ENCODE measurements at regions of chr9 and their contacts with region 1.

Region 1: DNA sequence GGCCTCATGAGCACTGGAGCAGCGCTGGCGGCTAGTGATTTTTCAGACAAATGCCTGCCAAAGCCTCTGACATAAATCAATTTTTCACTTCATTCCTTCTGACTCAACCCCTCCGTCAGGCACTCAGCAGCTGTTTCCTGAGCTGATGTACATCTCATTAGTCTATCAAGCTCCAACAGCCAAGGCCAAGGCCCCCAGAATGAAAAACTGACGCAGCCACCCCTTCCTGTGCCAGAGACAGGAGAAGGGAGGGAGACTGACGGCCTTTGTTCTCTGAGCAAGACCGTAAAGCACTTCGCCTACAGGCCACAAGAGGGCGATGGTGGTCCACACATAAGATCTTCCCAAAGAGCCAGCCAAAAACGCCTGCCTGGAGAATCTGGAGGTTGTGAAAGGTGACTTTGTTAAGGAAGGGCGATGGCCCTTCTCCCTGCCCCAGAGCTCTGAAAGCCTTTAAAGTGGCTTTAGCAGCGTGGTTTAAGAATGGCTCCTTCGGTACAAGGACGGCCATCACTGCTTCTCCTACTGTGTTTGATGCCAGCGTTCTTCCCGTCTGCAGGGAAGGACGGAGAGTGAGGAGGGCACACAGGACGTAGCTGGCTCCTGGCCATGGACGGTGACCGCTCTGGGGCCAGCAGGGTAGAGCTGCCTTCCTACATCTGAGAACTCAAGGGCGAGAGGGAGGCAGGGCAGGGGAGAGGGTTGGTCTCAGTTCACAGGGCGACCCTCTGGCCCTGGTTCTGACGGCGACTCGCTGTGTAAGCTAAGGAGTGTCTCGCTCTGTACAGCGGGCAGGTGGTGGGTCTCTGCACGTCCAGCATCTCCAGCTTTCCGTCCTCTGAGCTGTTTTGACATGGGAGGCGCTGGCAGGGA is 37.0 kb downstream of the ALG2 start:
- DNase-seq: peak; percentile 99
- H3K4me3 ChIP-seq: peak overlapping the region in 2 of 3 experiments; percentile 20 to 25
- H3K27ac ChIP-seq: peak overlapping the region; percentile 88
- H3K4me1 ChIP-seq: peaks cover 10% of the 10 kb centered on the region
- H3K27me3 ChIP-seq: peaks cover 3 to 5% of the 10 kb centered on the region in 2 experiments
- CTCF ChIP-seq: peak; percentile 94 to 97
- POLR2A ChIP-seq: peak; percentile 50

Region 2: DNA sequence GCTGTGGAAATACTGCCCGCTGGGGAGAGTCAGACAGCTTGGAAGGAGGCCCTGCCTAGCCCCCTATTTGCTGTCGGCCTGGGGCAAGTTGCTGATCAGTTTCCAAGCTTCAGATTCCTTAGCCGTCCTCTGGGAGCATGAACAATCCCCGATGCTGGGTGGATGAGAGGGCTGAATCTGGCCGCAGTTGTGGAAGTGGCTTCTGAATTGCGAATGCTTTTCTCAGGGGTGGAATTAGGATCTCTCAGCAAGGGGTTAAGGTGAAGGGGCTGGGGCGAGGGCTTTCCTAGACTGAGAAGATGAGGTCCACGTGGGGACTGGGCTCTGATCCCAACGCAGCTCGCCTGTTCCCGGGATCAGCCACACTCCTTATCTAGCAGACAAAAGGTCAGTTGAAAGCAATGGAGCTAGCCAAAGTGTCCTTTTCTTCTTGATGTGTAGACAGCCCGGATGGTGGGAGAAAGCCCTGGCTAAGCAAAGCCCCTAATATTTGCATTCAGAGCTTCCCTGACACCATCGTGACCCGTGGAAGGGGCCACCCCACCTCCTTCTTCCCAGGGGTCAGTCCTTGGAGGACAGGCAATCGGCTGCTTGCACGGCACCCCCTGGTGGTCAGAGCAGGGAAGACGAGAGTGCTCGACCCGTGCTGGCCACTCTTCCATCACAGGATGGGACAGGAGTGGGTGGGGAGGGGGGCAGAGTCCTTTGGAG is 186.1 kb before region 1 on chr9:
- CTCF ChIA-PET with region 1: no interaction called
- POLR2A ChIA-PET with region 1: no interaction called
- dilution Hi-C with region 1: no loop called
- intact Hi-C with region 1: loop called (anchors 1 kb)
- DNase-seq: peak; percentile 50
- H3K4me3 ChIP-seq: no peak overlapping the region
- H3K27ac ChIP-seq: no peak overlapping the region
- H3K4me1 ChIP-seq: no peaks in the 10 kb centered on the region
- H3K27me3 ChIP-seq: peaks cover 0 to 10% of the 10 kb centered on the region in 2 experiments
- CTCF ChIP-seq: peak; percentile 77 to 90
- POLR2A ChIP-seq: no peak

Region 3: GRCh38 chr9:99221621-99222415 is 37.1 kb after region 1 on chr9 and contains the starts of genes ALG2 and SEC61B:
- CTCF ChIA-PET with region 1: interaction called, 25 read pairs
- POLR2A ChIA-PET with region 1: interaction called, 13 read pairs
- dilution Hi-C with region 1: no loop called
- intact Hi-C with region 1: loop called (anchors 1 kb)
- DNase-seq: peak; percentile 97
- H3K4me3 ChIP-seq: peak within 1 kb of the TSS; percentile 55 to 98 (median 91)
- H3K27ac ChIP-seq: peak within 1 kb of the TSS; percentile 99
- H3K4me1 ChIP-seq: peaks cover 28% of the 10 kb centered on the region
- H3K27me3 ChIP-seq: no peaks in the 10 kb centered on the region
- CTCF ChIP-seq: no peak
- POLR2A ChIP-seq: peak; percentile 93
- total RNA-seq, gene ALG2: 31.4 and 32.4 TPM in 2 replicates
- total RNA-seq, gene SEC61B: 241 and 242 TPM in 2 replicates

Region 4: DNA sequence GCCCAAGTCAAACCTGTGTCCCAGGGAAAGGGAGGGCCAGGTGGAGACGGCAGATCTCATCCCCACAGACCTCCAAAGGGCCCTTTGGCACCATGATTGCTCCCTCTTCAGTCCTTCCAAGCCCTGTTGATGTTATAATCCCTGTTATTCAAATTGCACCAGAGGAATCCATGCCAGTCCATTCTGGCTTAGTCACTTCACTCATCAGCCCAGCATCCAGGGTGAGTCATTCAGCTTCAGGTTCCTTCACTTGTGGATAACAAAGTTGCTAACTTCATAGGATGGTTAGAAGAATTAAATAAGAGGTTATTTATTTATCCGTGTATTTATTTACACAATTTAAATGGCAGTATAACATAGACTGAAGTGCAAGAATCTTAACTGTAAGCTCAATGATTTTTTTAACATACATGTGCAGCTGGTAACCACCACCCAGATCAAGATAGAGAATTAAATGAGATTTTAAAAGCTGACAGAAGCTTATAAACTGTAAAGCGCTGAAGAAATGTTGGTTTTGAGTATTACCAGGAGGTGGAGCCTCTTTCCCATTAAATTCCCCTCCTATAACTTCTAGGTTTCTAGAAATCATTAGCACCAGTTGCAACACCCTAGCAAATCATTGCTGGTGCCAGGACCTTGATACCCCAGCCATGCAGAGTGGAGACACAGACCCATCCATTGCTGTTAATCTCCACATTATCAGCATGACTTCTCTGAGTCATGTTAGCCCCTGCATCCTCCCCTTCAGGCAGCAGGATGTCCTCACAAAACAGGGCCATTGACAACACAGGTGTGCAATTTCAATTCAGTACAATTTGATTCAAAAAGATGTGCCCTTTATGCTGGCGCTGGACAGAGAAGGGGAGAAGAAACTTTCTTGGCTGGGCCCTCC is 114.7 kb after region 1 on chr9:
- CTCF ChIA-PET with region 1: interaction called, 14 read pairs
- POLR2A ChIA-PET with region 1: no interaction called
- dilution Hi-C with region 1: no loop called
- intact Hi-C with region 1: no loop called
- DNase-seq: peak; percentile 38
- H3K4me3 ChIP-seq: no peak overlapping the region
- H3K27ac ChIP-seq: no peak overlapping the region
- H3K4me1 ChIP-seq: peaks cover 3% of the 10 kb centered on the region
- H3K27me3 ChIP-seq: peaks cover 0 to 3% of the 10 kb centered on the region in 2 experiments
- CTCF ChIP-seq: no peak
- POLR2A ChIP-seq: no peak

Region 5: GRCh38 chr9:100011062-100011681 is 826.5 kb after region 1 on chr9:
- CTCF ChIA-PET with region 1: interaction called, 30 read pairs
- POLR2A ChIA-PET with region 1: no interaction called
- dilution Hi-C with region 1: no loop called
- intact Hi-C with region 1: loop called (anchors 1 kb)
- DNase-seq: peak; percentile 62
- H3K4me3 ChIP-seq: no peak overlapping the region
- H3K27ac ChIP-seq: no peak overlapping the region
- H3K4me1 ChIP-seq: no peaks in the 10 kb centered on the region
- H3K27me3 ChIP-seq: no peaks in the 10 kb centered on the region
- CTCF ChIP-seq: peak; percentile 37 to 44
- POLR2A ChIP-seq: no peak

Region 6: DNA sequence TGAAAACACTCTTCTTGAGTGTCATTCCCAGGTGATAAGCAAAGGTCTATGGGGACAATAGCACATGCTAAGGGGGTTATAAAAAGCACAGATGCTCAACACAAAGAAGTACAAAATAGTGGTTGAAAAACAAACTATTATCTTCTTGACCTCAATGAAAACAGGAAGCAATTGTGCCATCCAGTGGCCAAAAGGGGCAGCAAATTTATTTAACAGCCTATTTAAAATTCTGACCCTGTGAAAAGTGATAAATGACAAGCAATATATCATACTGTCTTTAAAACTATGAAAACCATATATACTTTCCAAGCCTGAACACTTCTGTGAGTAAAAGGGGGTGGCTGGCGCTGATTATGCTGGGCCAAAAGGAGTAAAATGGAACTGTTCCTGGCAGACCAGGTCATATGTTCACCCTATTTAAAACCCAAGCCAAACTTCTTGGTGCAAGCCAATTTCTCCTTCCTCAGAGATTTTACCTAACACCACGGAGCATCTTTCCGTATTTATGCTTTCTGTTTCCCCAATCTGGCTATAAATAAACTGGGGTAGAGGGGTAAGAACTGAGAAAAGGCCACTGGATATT is 1138.3 kb after region 1 on chr9:
- CTCF ChIA-PET with region 1: interaction called, 29 read pairs
- POLR2A ChIA-PET with region 1: no interaction called
- dilution Hi-C with region 1: no loop called
- intact Hi-C with region 1: loop called (anchors 1 kb)
- DNase-seq: peak; percentile 52
- H3K4me3 ChIP-seq: no peak overlapping the region
- H3K27ac ChIP-seq: no peak overlapping the region
- H3K4me1 ChIP-seq: no peaks in the 10 kb centered on the region
- H3K27me3 ChIP-seq: no peaks in the 10 kb centered on the region
- CTCF ChIP-seq: peak; percentile 38 to 50
- POLR2A ChIP-seq: no peak